ENCODE measurements at regions of chr10 and their contacts with region 1.

Region 1: DNA sequence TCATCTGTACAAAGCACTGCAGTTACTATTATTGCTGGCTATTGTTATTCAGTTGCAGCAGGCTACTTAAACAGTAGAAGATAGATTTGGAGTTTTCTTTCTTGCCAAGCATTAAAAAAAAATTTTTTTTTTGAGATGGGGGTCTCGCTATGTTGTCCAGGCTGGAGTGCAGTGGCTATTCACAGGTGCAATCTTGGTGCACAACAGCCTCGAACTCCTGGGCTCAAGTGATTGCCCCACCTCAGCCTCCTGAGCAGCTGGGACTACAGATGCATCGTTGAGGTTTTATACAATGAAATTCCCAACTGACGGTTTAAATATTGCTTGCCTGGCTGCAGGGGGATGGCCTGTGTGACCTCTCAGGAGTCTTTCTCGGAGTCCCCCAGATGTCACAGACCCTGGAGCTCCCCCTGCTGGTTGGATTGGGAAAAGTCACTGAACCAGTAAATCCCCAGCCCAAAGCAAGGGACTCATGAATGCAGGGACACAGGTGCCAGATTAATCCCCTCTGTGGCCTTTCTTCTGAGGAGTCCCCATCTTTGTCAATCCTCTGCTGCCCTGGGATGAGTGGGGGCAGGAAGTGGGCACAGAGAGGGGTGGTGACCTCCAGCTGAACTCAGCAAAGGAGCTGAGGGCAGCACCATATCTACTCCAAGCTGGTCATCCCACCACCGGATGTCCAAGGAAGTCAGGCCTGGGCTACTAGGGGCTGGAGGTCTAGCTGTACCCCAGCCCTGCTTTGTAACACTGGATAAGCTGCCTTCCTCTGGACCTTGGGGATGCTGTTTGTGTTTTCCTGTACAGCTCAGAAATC is 149.6 kb downstream of the C10orf105 start:
- DNase-seq: peak; percentile 91
- H3K4me3 Mint-ChIP-seq: no peak overlapping the region
- H3K27ac Mint-ChIP-seq: no peak overlapping the region
- H3K4me1 Mint-ChIP-seq: no peaks in the 10 kb centered on the region
- H3K27me3 Mint-ChIP-seq: no peaks in the 10 kb centered on the region

Region 2: GRCh38 chr10:69731184-69731583 is 1838.8 kb before region 1 on chr10:
- CTCF ChIA-PET with region 1: no interaction called
- intact Hi-C with region 1: no loop called
- DNase-seq: no peak
- H3K4me3 Mint-ChIP-seq: no peak overlapping the region
- H3K27ac Mint-ChIP-seq: no peak overlapping the region
- H3K4me1 Mint-ChIP-seq: peaks cover 17% of the 10 kb centered on the region
- H3K27me3 Mint-ChIP-seq: no peaks in the 10 kb centered on the region

Region 3: DNA sequence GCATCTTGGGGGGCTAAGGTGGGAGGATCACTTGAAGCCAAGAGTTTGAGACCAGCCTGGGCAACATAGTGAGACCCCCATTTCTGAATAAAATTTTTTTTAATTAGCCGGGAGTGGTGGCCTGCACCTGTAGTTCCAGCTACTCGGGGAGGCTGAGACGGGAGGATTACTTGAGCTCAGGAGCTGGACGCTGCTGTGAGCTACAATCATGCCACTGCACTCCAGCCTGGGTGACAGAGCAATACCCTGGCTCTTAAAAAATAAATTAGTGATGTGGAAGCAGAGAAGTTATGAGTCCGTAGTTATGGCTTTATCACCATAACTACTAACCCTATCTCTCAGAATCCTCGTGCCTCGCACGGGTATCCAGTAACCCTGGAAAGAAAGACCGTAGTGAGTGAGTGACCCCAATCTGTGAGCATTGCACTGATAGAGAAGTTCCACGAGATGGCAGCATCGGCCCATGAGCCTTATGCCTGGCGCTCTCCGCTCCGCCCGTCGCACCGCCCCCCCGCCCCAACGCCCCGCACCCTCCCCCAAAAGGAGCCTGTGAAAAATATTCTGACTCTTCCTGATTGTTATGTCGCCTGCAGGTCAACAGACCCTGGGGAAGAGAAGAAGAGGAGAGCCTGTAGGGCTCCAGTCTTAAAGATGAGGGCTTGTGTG is 255.8 kb before region 1 on chr10:
- CTCF ChIA-PET with region 1: interaction called, 28 read pairs
- intact Hi-C with region 1: loop called (anchors 1 kb)
- DNase-seq: peak; percentile 62
- H3K4me3 Mint-ChIP-seq: no peak overlapping the region
- H3K27ac Mint-ChIP-seq: no peak overlapping the region
- H3K4me1 Mint-ChIP-seq: peaks cover 18% of the 10 kb centered on the region
- H3K27me3 Mint-ChIP-seq: peaks cover 5% of the 10 kb centered on the region

Region 4: DNA sequence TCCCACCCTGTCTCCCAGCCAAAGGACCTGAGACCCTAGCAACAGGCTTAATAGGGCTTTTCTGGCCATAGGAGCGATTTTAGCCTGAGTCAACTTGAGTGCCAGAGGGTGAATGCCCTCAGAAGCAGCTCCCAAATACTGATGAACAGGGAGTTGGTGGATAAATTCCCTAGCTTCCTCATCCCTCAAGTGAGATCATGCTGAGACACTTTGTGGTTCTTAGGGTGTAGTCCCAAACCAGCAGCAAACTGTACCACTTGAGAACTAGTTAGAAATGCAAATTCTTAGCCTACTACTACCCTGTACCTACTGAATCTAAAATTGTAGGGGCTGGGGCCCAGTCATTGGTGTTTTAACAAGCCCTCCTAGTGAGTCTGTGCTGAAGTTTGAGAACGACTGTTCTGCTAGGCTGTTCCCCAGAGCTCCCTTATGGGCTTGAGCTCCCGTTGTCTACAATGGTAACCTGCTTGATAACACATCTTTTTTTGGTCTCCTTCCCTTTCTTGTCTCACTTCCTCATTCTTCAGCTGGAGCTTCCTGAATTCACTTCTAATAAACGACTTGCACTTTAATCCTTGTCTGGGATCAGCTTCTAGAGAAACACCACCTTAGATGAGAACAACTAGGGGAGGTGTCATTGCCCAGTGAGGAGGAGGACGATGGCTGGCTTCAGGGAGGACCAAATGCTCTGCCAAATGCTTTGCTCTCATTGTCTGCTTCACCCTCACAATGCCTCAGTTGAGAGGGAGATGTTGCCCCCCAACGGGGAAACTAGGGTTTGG is 191.5 kb before region 1 on chr10:
- CTCF ChIA-PET with region 1: interaction called, 53 read pairs
- intact Hi-C with region 1: no loop called
- DNase-seq: no peak
- H3K4me3 Mint-ChIP-seq: no peak overlapping the region
- H3K27ac Mint-ChIP-seq: no peak overlapping the region
- H3K4me1 Mint-ChIP-seq: peaks cover 4% of the 10 kb centered on the region
- H3K27me3 Mint-ChIP-seq: no peaks in the 10 kb centered on the region

Region 5: GRCh38 chr10:71396084-71396720 is 173.8 kb before region 1 on chr10:
- CTCF ChIA-PET with region 1: interaction called, 40 read pairs
- intact Hi-C with region 1: loop called (anchors 1 kb)
- DNase-seq: peak; percentile 62
- H3K4me3 Mint-ChIP-seq: peak overlapping the region; percentile 45
- H3K27ac Mint-ChIP-seq: no peak overlapping the region
- H3K4me1 Mint-ChIP-seq: peaks cover 2% of the 10 kb centered on the region
- H3K27me3 Mint-ChIP-seq: peaks cover 58% of the 10 kb centered on the region

Region 6: DNA sequence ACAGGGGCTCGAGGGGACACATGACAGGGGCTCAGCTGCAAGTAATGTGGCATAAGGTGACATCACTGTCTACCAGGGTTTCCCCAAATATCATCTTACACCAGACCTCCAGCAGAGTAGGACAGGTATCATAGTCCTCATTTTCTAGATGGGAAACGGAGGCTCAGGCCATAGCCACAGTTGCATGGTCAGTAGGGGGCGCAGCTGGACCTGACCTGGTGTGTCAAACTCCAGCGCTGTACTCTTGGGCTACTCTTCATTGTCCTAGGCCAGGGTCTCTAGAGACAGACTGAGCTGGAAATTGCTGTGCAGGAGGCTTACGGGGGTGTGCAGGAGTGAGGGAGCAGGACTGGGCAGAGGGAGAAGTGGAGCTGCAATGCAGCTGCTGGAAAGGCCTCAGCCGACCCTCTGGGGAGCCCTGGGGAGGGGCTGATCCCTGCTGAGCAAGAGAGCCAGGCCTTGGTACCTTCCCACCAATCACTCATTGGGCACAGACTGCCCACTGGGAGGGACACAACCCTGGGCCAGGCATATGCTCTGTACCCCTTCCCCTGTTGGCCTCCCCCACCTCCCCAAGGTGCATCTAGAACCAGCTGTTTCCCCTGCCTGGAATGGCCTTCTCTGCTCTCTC is 83.4 kb before region 1 on chr10:
- CTCF ChIA-PET with region 1: interaction called, 16 read pairs
- intact Hi-C with region 1: loop called (anchors 1 kb)
- DNase-seq: peak; percentile 73
- H3K4me3 Mint-ChIP-seq: no peak overlapping the region
- H3K27ac Mint-ChIP-seq: no peak overlapping the region
- H3K4me1 Mint-ChIP-seq: no peaks in the 10 kb centered on the region
- H3K27me3 Mint-ChIP-seq: no peaks in the 10 kb centered on the region

Region 7: GRCh38 chr10:71504570-71504969 is 65.4 kb before region 1 on chr10:
- CTCF ChIA-PET with region 1: no interaction called
- intact Hi-C with region 1: no loop called
- DNase-seq: no peak
- H3K4me3 Mint-ChIP-seq: no peak overlapping the region
- H3K27ac Mint-ChIP-seq: no peak overlapping the region
- H3K4me1 Mint-ChIP-seq: no peaks in the 10 kb centered on the region
- H3K27me3 Mint-ChIP-seq: no peaks in the 10 kb centered on the region

Region 8: GRCh38 chr10:71558991-71559390 is 11.0 kb before region 1 on chr10:
- CTCF ChIA-PET with region 1: interaction called, 13 read pairs
- intact Hi-C with region 1: no loop called
- DNase-seq: no peak
- H3K4me3 Mint-ChIP-seq: no peak overlapping the region
- H3K27ac Mint-ChIP-seq: no peak overlapping the region
- H3K4me1 Mint-ChIP-seq: no peaks in the 10 kb centered on the region
- H3K27me3 Mint-ChIP-seq: peaks cover 7% of the 10 kb centered on the region

Measured in activated naive CD4-positive, alpha-beta T cell treated with anti-CD3 and anti-CD28 coated beads for 36 hours (primary cell).